A549 (cell line): ENCODE measurements at regions of chr19 and their contacts with region 1.

Region 1: GRCh38 chr19:41206926-41207750 is 11.9 kb upstream of the AXL start:
- DNase-seq: no peak
- ATAC-seq: no peak
- H3K4me3 ChIP-seq: no peak overlapping the region
- H3K27ac ChIP-seq: no peak overlapping the region
- H3K4me1 ChIP-seq: no peaks in the 10 kb centered on the region
- CTCF ChIP-seq: no peak
- EP300 ChIP-seq: no peak
- POLR2A ChIP-seq: no peak
- RAD21 ChIP-seq: no peak

Region 2: GRCh38 chr19:41123716-41124294 is 83.3 kb before region 1 on chr19:
- CTCF ChIA-PET with region 1: interaction called, 10 read pairs
- POLR2A ChIA-PET with region 1: no interaction called
- DNase-seq: no peak
- ATAC-seq: no peak
- H3K4me3 ChIP-seq: no peak overlapping the region
- H3K27ac ChIP-seq: no peak overlapping the region
- H3K4me1 ChIP-seq: peaks cover 10% of the 10 kb centered on the region
- CTCF ChIP-seq: no peak
- EP300 ChIP-seq: no peak
- POLR2A ChIP-seq: no peak
- RAD21 ChIP-seq: no peak

Region 3: GRCh38 chr19:41192574-41193429 is 14.3 kb before region 1 on chr19 and contains the start of gene CYP2S1:
- CTCF ChIA-PET with region 1: interaction called, 96 read pairs
- POLR2A ChIA-PET with region 1: interaction called, 6 read pairs
- DNase-seq: peak; percentile 77 to 93
- ATAC-seq: peak; percentile 73 to 91
- H3K4me3 ChIP-seq: peak within 1 kb of the TSS; percentile 55
- H3K27ac ChIP-seq: peak within 1 kb of the TSS; percentile 66 to 87
- H3K4me1 ChIP-seq: peaks cover 37% of the 10 kb centered on the region
- CTCF ChIP-seq: 0 out of 3 replicates have a peak, but pooled peaks have one; percentile 11
- EP300 ChIP-seq: no peak
- POLR2A ChIP-seq: peak; percentile 90
- RAD21 ChIP-seq: peak in 1 of 2 experiments; percentile 41; a peak in 3 of 5 replicates
- polyA plus RNA-seq, gene CYP2S1: 8.6 and 19.7 TPM in 2 replicates

Region 4: GRCh38 chr19:41233748-41234240 is 26.7 kb after region 1 on chr19:
- CTCF ChIA-PET with region 1: interaction called, 295 read pairs
- POLR2A ChIA-PET with region 1: interaction called, 3 read pairs
- DNase-seq: no peak
- ATAC-seq: no peak
- H3K4me3 ChIP-seq: no peak overlapping the region
- H3K27ac ChIP-seq: peak overlapping the region in 1 of 2 experiments; percentile 5; a peak in 1 of 6 replicates
- H3K4me1 ChIP-seq: peaks cover 6% of the 10 kb centered on the region; the same call in 2 of the 3 replicates
- CTCF ChIP-seq: no peak
- EP300 ChIP-seq: no peak
- POLR2A ChIP-seq: no peak
- RAD21 ChIP-seq: no peak

Region 5: DNA sequence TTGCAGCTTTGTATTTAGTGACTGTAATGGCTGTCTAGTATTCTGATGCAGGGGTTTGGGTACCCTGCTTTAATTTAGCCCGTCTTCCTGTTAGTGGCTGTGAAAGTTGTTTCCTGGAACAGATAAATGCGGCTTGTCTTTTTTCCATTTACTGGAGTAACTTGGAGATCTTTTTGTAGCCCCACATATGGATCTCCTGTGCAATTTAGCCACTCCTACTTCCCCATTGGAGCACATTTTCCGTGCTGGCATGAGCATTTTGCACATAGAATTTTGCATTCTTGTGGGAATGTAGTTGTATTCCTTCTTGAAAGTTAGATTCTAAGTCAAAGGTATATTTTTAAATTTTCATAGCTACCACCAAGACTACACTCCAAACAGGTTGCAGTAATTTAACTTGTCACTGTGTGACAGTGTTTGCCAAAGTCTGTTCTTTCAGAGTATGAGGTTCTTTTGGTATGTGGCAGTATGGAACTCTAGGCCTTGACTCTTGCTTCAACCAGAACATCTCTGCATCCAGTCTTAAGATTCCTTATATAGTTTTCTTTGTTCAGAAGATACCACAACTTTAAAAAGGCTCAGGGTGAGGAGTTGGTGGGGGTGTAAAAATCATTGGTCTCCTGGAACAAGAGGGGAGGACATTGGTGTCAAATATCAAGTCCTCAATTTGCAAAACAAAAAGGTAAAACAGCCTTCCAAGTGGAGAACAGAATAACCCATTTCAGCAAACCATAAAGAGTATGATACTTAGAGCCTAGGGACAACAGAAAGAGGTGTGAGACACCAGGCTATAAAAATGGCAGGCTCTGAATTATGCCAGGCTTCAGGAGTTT is 81.8 kb after region 1 on chr19:
- CTCF ChIA-PET with region 1: interaction called, 280 read pairs
- POLR2A ChIA-PET with region 1: no interaction called
- DNase-seq: no peak
- ATAC-seq: no peak
- H3K4me3 ChIP-seq: no peak overlapping the region
- H3K27ac ChIP-seq: no peak overlapping the region
- H3K4me1 ChIP-seq: no peaks in the 10 kb centered on the region
- CTCF ChIP-seq: no peak
- EP300 ChIP-seq: no peak
- POLR2A ChIP-seq: no peak
- RAD21 ChIP-seq: no peak